Prostate gland (tissue), 2 donors: ENCODE measurements at regions of chr9 and their contacts with region 1.

Region 1: GRCh38 chr9:91298311-91298710 is 63.4 kb downstream of the AUH start:
- DNase-seq: no peak
- H3K4me3 ChIP-seq: no peak overlapping the region
- H3K27ac ChIP-seq: no peak overlapping the region
- H3K4me1 ChIP-seq: no peaks in the 10 kb centered on the region
- H3K27me3 ChIP-seq: no peaks in the 10 kb centered on the region
- CTCF ChIP-seq: no peak
- POLR2A ChIP-seq: no peak

Region 2: DNA sequence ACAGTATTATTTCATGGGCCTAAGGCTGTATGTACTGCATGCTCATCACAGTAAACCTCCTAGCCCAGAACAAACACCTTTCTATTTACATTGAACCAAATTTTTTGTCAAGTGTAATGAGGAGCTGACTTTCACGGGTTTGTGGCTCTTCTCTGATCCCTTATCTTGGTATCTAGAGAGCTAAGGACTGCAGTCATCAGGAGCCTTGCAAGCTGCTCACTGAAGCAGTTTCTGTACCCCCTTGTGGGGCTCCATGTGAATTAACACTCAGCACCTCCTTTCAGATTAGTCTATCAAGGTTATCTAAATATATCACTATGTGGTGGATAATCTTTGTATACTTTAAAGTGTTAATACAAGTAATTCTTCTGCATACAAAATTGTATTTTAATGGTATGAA is 44.8 kb before region 1 on chr9:
- intact Hi-C with region 1: no loop called
- DNase-seq: no peak
- H3K4me3 ChIP-seq: no peak overlapping the region
- H3K27ac ChIP-seq: no peak overlapping the region
- H3K4me1 ChIP-seq: no peaks in the 10 kb centered on the region
- H3K27me3 ChIP-seq: no peaks in the 10 kb centered on the region
- CTCF ChIP-seq: no peak
- POLR2A ChIP-seq: no peak

Region 3: GRCh38 chr9:91361291-91362050 is 63.2 kb after region 1 on chr9 and contains the start of gene AUH:
- intact Hi-C with region 1: loop called (anchors 5 kb)
- DNase-seq: peak; percentile 81
- H3K4me3 ChIP-seq: peak within 1 kb of the TSS; percentile 97 to 100
- H3K27ac ChIP-seq: peak within 1 kb of the TSS; percentile 93 to 94
- H3K4me1 ChIP-seq: peaks cover under 1% of the 10 kb centered on the region
- H3K27me3 ChIP-seq: no peaks in the 10 kb centered on the region
- CTCF ChIP-seq: peak in 1 of 4 experiments; percentile 25
- POLR2A ChIP-seq: peak; percentile 87
- total RNA-seq, gene AUH: 58.0 to 76.1 TPM

Region 4: DNA sequence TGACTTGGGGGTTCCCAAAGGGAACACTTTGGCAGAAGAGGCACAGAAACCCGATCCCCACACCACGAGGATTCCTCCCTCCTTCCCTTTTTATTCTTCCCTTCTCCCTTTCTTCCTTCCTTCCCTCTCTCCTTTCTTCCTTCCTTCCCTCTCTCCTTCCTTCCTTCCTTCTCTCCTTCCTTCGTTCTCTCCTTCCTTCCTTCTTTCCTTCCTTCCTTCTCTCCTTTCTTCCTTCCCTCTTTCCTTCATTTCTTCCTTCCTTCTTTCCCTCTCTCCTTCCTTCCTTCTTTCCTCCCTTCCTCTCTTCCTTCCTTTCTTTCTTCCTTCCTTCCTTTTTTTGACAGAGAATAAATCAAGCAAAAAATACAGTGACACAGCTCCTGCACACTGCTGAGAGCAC is 293.3 kb after region 1 on chr9:
- intact Hi-C with region 1: no loop called
- DNase-seq: no peak
- H3K4me3 ChIP-seq: no peak overlapping the region
- H3K27ac ChIP-seq: no peak overlapping the region
- H3K4me1 ChIP-seq: no peaks in the 10 kb centered on the region
- H3K27me3 ChIP-seq: peaks cover 3% of the 10 kb centered on the region
- CTCF ChIP-seq: no peak
- POLR2A ChIP-seq: no peak